Mammary epithelial cell (primary cell): ENCODE measurements at regions of chr20 and their contacts with region 1.

Region 1: DNA sequence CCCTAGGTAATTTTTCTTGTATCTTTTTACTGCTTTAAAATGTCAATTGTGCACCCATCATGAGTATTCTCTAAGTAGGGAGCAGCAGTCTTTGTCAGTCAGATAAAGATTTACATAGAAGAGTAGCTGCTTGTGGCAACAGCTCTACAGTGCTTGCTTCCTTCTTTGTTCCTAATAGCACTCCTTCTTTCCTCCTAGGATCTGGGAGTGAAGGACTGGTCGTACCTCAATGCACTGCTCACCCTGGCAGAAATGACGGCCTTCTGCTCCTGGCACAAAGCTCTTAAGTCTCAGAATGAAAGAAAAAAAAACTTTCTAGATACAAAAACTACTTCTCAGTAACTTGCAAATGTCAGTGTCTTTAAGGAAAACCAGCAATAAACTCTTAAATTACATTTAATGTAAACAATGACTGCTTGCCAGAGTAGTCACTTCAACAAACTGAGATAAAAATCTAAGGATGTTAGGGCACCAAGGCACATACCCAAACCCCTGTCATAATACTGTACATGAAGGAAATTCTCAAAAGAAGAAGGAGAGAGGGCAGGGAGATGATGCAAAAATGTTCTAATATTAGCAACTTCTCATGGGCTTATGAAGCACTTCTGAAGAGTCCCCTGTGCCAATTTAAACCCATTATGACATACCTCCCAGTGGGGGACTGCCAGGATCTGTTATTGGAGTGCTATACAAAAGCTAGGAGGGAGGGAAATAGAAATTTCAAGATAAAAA is 34.0 kb downstream of the NCOA6 start:
- DNase-seq: no peak
- H3K4me3 ChIP-seq: no peak overlapping the region
- H3K27ac ChIP-seq: no peak overlapping the region
- H3K4me1 ChIP-seq: no peaks in the 10 kb centered on the region
- H3K27me3 ChIP-seq: no peaks in the 10 kb centered on the region
- CTCF ChIP-seq: no peak

Region 2: DNA sequence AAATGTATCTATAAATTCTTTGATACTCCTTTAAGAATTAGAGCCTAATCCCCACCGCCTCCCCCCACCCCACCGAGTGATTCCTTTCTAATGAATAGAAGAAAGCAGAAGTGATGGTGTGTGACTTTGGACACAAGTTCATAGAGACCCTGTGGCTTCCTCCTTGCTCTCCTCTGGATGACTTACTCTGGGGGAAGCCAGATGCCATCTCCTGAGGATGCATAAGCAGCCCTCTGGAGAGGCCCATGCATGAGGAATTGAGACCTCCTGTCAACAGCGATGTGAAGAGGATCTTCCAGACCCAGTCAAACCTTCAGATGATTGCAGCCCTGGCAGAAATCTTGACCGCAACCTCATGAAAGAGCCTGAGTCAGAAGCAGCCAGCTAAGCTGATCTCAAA is 509.4 kb before region 1 on chr20:
- CTCF ChIA-PET with region 1: no interaction called
- dilution Hi-C with region 1: no loop called
- in situ Hi-C with region 1: loop called in 1 of 2 experiments (anchors 25 kb)
- intact Hi-C with region 1: no loop called
- DNase-seq: no peak
- H3K4me3 ChIP-seq: no peak overlapping the region
- H3K27ac ChIP-seq: no peak overlapping the region
- H3K4me1 ChIP-seq: no peaks in the 10 kb centered on the region
- H3K27me3 ChIP-seq: no peaks in the 10 kb centered on the region
- CTCF ChIP-seq: no peak